Transverse colon (tissue), 4 donors: ENCODE measurements at regions of chr4 and their contacts with region 1.

Region 1: GRCh38 chr4:186725469-186726425 is 2.1 kb upstream of the FAT1 start:
- DNase-seq: peak; percentile 87
- H3K4me3 ChIP-seq: peak overlapping the region; percentile 69 to 96 (median 80)
- H3K27ac ChIP-seq: peak overlapping the region; percentile 94 to 97 (median 96)
- H3K4me1 ChIP-seq: peaks cover 0 to 36% (median 12%) of the 10 kb centered on the region in 4 donors
- H3K27me3 ChIP-seq: peaks cover 13% of the 10 kb centered on the region
- CTCF ChIP-seq: peak; percentile 51 to 67 (median 58)
- EP300 ChIP-seq: no peak
- POLR2A ChIP-seq: no peak

Region 2: GRCh38 chr4:186676531-186677161 is 49.1 kb before region 1 on chr4:
- in situ Hi-C with region 1: no loop called
- intact Hi-C with region 1: loop called (anchors 5 kb)
- DNase-seq: no peak
- H3K4me3 ChIP-seq: no peak overlapping the region
- H3K27ac ChIP-seq: peak overlapping the region; percentile 49 to 68 (median 60)
- H3K4me1 ChIP-seq: peaks cover 3 to 22% (median 5%) of the 10 kb centered on the region in 4 donors
- H3K27me3 ChIP-seq: no peaks in the 10 kb centered on the region
- CTCF ChIP-seq: no peak
- EP300 ChIP-seq: peak; percentile 34
- POLR2A ChIP-seq: no peak

Region 3: GRCh38 chr4:186946682-186947294 is 221.0 kb after region 1 on chr4:
- in situ Hi-C with region 1: loop called (anchors 25 kb)
- intact Hi-C with region 1: no loop called
- DNase-seq: peak; percentile 80
- H3K4me3 ChIP-seq: no peak overlapping the region
- H3K27ac ChIP-seq: peak overlapping the region in 3 of 4 donors; percentile 4 to 58 (median 35)
- H3K4me1 ChIP-seq: peaks cover 5 to 39% (median 20%) of the 10 kb centered on the region in 4 donors
- H3K27me3 ChIP-seq: no peaks in the 10 kb centered on the region
- CTCF ChIP-seq: peak; percentile 42 to 91 (median 62)
- EP300 ChIP-seq: no peak
- POLR2A ChIP-seq: no peak

Region 4: DNA sequence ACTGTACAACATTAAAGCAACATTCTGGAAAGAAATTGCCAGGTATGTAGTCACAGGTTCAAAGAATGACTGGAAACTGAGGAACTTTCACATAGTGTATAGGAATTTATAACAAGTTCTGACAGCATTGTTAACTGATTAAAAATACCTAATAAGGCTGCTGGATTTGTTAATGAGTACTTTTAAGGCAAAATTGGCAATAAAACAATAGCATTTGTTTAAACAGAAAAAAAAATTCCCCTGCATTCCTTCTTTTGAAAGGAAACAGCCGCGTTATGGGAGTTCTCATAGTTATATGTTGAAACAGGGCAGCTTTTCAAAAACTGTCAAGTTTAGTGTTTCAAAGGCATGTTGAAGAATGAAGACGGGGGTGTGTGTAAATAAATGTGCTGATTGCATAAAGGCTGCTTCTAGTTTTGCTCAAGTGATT is 280.5 kb after region 1 on chr4:
- in situ Hi-C with region 1: no loop called
- intact Hi-C with region 1: no loop called
- DNase-seq: no peak
- H3K4me3 ChIP-seq: no peak overlapping the region
- H3K27ac ChIP-seq: no peak overlapping the region
- H3K4me1 ChIP-seq: no peaks in the 10 kb centered on the region
- H3K27me3 ChIP-seq: no peaks in the 10 kb centered on the region
- CTCF ChIP-seq: no peak
- EP300 ChIP-seq: no peak
- POLR2A ChIP-seq: no peak